Naive thymus-derived CD4-positive, alpha-beta T cell (primary cell): ENCODE measurements at regions of chr6 and their contacts with region 1.

Region 1: GRCh38 chr6:16332175-16332542 is 93.8 kb downstream of the GMPR start:
- DNase-seq: peak; percentile 51 to 80 (median 73)
- ATAC-seq: peak; percentile 96
- H3K4me3 ChIP-seq: peak overlapping the region; percentile 19
- H3K4me3 Mint-ChIP-seq: no peak overlapping the region
- H3K27ac ChIP-seq: peak overlapping the region; percentile 32
- H3K27ac Mint-ChIP-seq: no peak overlapping the region
- H3K4me1 ChIP-seq: peaks cover 12 to 13% of the 10 kb centered on the region in 2 donors
- H3K4me1 Mint-ChIP-seq: peaks cover 0 to 6% (median 0%) of the 10 kb centered on the region in 7 donors
- H3K27me3 ChIP-seq: no peaks in the 10 kb centered on the region
- H3K27me3 Mint-ChIP-seq: no peaks in the 10 kb centered on the region

Region 2: GRCh38 chr6:16361861-16362260 is 29.7 kb after region 1 on chr6:
- CTCF ChIA-PET with region 1: no interaction called
- POLR2A ChIA-PET with region 1: no interaction called
- intact Hi-C with region 1: no loop called
- DNase-seq: no peak
- ATAC-seq: no peak
- H3K4me3 ChIP-seq: no peak overlapping the region
- H3K4me3 Mint-ChIP-seq: no peak overlapping the region
- H3K27ac ChIP-seq: no peak overlapping the region
- H3K27ac Mint-ChIP-seq: no peak overlapping the region
- H3K4me1 ChIP-seq: no peaks in the 10 kb centered on the region
- H3K4me1 Mint-ChIP-seq: no peaks in the 10 kb centered on the region
- H3K27me3 ChIP-seq: no peaks in the 10 kb centered on the region
- H3K27me3 Mint-ChIP-seq: no peaks in the 10 kb centered on the region

Region 3: DNA sequence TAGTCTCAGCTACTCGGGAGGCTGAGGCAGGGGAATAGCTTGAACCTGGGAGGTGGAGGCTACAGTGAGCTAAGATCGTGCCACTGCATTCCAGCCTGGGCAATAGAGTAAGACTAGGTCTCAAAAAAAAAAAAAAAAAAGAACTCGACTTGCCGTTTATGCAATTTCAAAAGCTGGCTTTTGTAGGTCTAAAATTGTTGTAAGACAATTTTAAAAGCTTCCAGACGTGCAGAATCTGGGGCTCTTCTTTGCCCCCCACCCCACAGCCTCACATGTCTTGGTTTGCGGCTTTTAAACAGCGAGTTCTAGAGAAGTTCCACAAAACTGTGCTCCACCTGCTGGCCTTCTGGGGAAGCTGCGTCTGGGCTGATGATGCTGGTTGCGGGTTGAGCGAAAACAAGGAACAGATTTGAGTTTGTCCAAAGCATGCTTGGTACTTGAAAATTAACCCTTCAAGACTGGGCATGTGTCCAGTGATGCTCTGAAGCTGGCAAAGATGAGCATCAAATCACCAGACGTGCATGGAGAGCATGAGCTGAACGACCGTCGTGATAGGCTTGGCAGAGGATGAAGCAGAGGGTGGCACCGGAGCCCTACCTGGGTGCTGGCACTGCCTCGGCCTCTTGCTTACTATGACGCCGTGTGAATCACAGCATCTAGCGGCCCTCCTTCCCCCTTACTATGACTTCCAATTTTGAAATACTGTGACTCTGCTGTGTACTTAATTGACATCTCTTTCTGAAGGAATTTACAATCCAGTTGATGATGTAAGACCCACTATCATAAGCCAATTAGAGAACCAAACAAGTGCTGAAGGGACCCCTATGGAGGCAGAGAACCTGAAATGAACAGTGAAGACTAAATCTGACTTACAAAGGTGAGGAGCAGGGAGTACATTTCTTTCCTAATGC is 77.6 kb after region 1 on chr6:
- CTCF ChIA-PET with region 1: no interaction called
- POLR2A ChIA-PET with region 1: no interaction called
- intact Hi-C with region 1: loop called (anchors 1 to 10 kb)
- DNase-seq: peak; percentile 3 to 45 (median 29)
- ATAC-seq: peak; percentile 78
- H3K4me3 ChIP-seq: no peak overlapping the region
- H3K4me3 Mint-ChIP-seq: peak overlapping the region in 6 of 10 donors; percentile 11 to 46 (median 29)
- H3K27ac ChIP-seq: no peak overlapping the region
- H3K27ac Mint-ChIP-seq: peak overlapping the region in 2 of 9 donors; percentile 34 to 45
- H3K4me1 ChIP-seq: peaks cover 0 to 8% of the 10 kb centered on the region in 2 donors
- H3K4me1 Mint-ChIP-seq: peaks cover 7 to 61% (median 20%) of the 10 kb centered on the region in 7 donors
- H3K27me3 ChIP-seq: no peaks in the 10 kb centered on the region
- H3K27me3 Mint-ChIP-seq: no peaks in the 10 kb centered on the region

Region 4: GRCh38 chr6:16514249-16514648 is 182.1 kb after region 1 on chr6:
- CTCF ChIA-PET with region 1: interaction called, 7 read pairs
- POLR2A ChIA-PET with region 1: no interaction called
- intact Hi-C with region 1: loop called (anchors 1 to 5 kb)
- DNase-seq: peak in 6 of 9 donors; percentile 16 to 31 (median 24)
- ATAC-seq: peak; percentile 59
- H3K4me3 ChIP-seq: no peak overlapping the region
- H3K4me3 Mint-ChIP-seq: peak overlapping the region in 1 of 10 donors; percentile 41
- H3K27ac ChIP-seq: no peak overlapping the region
- H3K27ac Mint-ChIP-seq: peak overlapping the region in 7 of 9 donors; percentile 10 to 56 (median 40)
- H3K4me1 ChIP-seq: peaks cover 14 to 29% of the 10 kb centered on the region in 2 donors
- H3K4me1 Mint-ChIP-seq: peaks cover 29 to 73% (median 58%) of the 10 kb centered on the region in 7 donors
- H3K27me3 ChIP-seq: no peaks in the 10 kb centered on the region
- H3K27me3 Mint-ChIP-seq: no peaks in the 10 kb centered on the region

Region 5: DNA sequence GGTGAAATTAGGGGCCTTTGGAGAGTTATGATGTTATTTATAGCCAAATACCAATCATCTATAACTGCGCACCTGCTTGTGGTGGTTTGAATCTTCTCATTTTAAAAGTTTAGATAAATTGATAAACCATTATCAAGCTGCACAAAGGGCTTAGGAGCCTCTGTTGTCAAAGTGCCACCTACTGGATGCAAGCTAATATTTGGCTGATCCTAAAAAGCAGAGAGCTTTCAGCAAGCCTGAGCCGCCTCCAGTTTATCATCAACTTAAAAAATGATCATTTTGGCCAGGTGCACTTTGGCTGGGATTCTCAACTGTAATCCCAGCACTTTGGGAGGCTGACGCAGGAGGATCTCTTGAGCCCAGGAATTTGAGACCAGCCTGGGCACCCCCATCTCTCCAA is 487.6 kb after region 1 on chr6:
- CTCF ChIA-PET with region 1: interaction called, 4 read pairs
- POLR2A ChIA-PET with region 1: no interaction called
- intact Hi-C with region 1: loop called in 1 of 2 experiments (anchors 1 kb)
- DNase-seq: no peak
- ATAC-seq: no peak
- H3K4me3 ChIP-seq: no peak overlapping the region
- H3K4me3 Mint-ChIP-seq: no peak overlapping the region
- H3K27ac ChIP-seq: no peak overlapping the region
- H3K27ac Mint-ChIP-seq: no peak overlapping the region
- H3K4me1 ChIP-seq: no peaks in the 10 kb centered on the region
- H3K4me1 Mint-ChIP-seq: no peaks in the 10 kb centered on the region
- H3K27me3 ChIP-seq: peaks cover 0 to 3% of the 10 kb centered on the region in 2 donors
- H3K27me3 Mint-ChIP-seq: peaks cover 5 to 33% (median 9%) of the 10 kb centered on the region in 5 donors

Region 6: GRCh38 chr6:17086469-17086868 is 754.3 kb after region 1 on chr6:
- CTCF ChIA-PET with region 1: no interaction called
- POLR2A ChIA-PET with region 1: no interaction called
- intact Hi-C with region 1: loop called in 1 of 2 experiments (anchors 5 kb)
- DNase-seq: peak in 3 of 9 donors; percentile 0 to 6 (median 3)
- ATAC-seq: no peak
- H3K4me3 ChIP-seq: no peak overlapping the region
- H3K4me3 Mint-ChIP-seq: no peak overlapping the region
- H3K27ac ChIP-seq: no peak overlapping the region
- H3K27ac Mint-ChIP-seq: no peak overlapping the region
- H3K4me1 ChIP-seq: no peaks in the 10 kb centered on the region
- H3K4me1 Mint-ChIP-seq: no peaks in the 10 kb centered on the region
- H3K27me3 ChIP-seq: no peaks in the 10 kb centered on the region
- H3K27me3 Mint-ChIP-seq: peaks cover 4 to 22% (median 14%) of the 10 kb centered on the region in 5 donors